Common myeloid progenitor, CD34-positive (primary cell): ENCODE measurements at regions of chr11 and their contacts with region 1.

Region 1: DNA sequence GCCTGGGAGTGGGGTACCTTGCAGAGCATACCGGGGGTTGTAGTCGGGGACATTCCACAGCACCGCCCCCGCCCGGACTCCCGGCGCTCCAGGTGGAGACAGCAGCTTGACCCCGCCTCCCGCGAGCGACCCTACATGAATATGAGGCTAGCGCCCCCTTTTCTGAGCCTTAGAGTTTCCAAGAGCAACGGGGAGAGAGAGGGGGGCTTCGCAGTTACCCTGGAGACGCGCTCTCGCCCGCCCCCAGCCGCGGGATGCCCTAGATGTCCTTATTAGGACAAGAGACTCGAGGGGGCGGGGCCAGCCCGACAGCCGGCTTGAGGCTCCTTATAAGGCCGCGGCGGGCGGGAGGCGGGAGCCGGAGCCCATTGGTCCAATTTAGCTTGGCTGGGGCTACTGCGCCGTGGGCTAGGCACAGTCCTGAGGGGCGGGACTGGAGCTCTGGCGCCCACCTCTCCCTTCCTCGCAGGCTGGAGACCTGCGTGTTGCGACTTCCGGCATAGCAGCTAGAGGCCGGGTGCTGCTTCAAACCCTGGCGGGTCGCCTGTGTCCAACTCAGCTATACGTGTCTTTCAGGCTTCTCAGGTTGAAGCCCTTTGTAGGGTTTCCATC is 927 bp upstream of the MUS81 start:
- DNase-seq: peak; percentile 97 to 99 (median 99)
- H3K4me3 ChIP-seq: peak overlapping the region; percentile 80 to 96 (median 90)
- H3K27ac ChIP-seq: peak overlapping the region; percentile 68 to 85
- H3K4me1 ChIP-seq: peaks cover 14 to 52% (median 49%) of the 10 kb centered on the region in 4 experiments
- H3K27me3 ChIP-seq: no peaks in the 10 kb centered on the region

Region 2: DNA sequence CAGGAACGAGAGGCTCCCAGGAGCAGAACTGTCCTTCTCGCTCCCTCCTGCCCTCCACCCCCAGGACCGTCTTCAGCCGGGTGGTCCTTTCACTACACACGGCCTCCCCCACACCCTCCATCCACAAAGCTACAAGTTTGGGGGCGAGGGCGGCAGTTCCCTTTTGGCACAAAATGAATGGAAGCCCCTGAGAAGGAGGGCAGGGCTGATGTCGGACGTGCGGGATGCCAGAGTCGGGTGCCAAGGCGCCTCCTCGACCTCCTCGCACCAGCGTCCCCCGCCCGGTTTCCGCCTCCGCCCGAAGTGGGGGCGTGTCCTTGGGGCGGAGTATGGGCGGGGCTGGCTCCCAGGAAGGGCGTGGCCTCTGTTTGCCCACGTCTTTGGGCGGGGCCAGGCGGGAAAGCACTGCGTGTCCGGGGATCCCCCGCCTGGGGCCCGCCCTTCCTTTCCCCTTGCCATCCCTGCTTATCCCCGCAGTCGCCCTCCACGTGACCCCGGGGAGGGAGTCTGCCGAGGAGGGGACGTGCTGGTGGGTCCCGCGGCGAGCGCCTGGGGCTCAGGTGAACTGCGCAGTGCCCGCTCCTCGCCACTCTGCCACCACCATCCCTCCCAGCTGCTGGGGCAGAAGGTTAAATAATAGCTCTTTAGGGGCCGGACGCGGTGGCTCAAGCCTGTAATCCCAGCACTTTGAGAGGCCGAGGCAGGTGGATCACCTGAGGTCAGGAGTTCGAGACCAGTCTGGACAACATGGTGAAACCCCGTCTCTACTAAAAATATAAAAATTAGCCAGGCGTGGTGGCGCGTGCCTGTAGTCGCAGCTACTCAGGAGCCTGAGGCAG is 14.2 kb after region 1 on chr11:
- CTCF ChIA-PET with region 1: interaction called, 81 read pairs
- POLR2A ChIA-PET with region 1: interaction called, 22 read pairs
- DNase-seq: peak; percentile 84 to 89 (median 89)
- H3K4me3 ChIP-seq: peak overlapping the region; percentile 10 to 82 (median 65)
- H3K27ac ChIP-seq: peak overlapping the region in 1 of 2 experiments; percentile 43
- H3K4me1 ChIP-seq: peaks cover 0 to 53% (median 40%) of the 10 kb centered on the region in 4 experiments
- H3K27me3 ChIP-seq: no peaks in the 10 kb centered on the region

Region 3: GRCh38 chr11:65879617-65880016 is 20.3 kb after region 1 on chr11 and contains the start of gene CTSW:
- CTCF ChIA-PET with region 1: interaction called, 168 read pairs
- POLR2A ChIA-PET with region 1: interaction called, 11 read pairs
- DNase-seq: peak in 2 of 3 donors; percentile 78 to 85
- H3K4me3 ChIP-seq: peak within 1 kb of the TSS in 6 of 7 experiments; percentile 31 to 72 (median 56)
- H3K27ac ChIP-seq: peak within 1 kb of the TSS; percentile 4 to 54
- H3K4me1 ChIP-seq: peaks cover 0 to 39% (median 26%) of the 10 kb centered on the region in 4 experiments
- H3K27me3 ChIP-seq: no peaks in the 10 kb centered on the region

Region 4: DNA sequence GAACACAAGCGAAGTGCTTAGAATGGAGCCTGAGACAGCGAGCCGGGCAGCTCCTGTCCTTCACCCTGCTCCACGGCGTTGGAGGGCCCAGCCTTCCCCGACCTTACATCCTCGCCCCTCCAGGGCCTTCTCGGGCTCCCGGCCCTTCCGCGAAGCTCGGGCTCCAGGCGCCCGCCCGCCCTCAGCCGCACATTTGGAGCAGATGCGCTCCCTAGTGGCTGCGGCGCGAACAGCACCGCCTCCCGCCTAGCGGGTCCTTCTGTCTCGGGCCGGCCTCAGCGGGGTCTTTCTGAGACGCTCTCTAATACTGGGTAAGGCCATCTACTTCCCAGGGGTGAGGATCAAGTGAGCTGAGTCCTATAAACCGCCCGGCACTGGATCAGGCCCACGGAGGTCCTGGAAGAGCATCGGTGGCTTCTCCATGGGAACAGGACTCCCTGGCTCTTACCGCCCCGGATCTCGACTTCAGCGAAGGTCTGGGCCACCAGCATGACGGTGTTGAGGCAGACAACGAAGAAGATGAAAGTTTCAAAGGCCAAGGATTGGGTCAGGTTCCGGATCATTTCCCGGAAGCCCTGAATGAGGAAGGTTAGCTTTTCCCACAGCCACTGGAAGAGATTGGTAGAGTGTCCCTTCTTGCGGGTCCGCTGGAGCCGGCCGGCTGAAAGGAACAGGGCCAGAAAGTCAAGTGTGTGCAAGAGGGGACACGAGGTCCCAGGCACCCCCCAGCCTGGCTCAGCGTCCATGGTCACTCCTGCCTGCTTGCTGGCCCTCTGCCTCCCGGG is 163.3 kb after region 1 on chr11:
- CTCF ChIA-PET with region 1: no interaction called
- POLR2A ChIA-PET with region 1: no interaction called
- DNase-seq: peak; percentile 57 to 71 (median 68)
- H3K4me3 ChIP-seq: peak overlapping the region in 3 of 7 experiments; percentile 19 to 56 (median 53)
- H3K27ac ChIP-seq: no peak overlapping the region
- H3K4me1 ChIP-seq: peaks cover 0 to 26% (median 23%) of the 10 kb centered on the region in 4 experiments
- H3K27me3 ChIP-seq: peaks cover 0 to 7% (median 0%) of the 10 kb centered on the region in 5 experiments